GM12878 (cell line): ENCODE measurements at regions of chr2 and their contacts with region 1.

Region 1: GRCh38 chr2:137910641-137911040 is 53.6 kb upstream of the HNMT start:
- DNase-seq: no peak
- ATAC-seq: no peak
- H3K4me3 ChIP-seq: no peak overlapping the region
- H3K27ac ChIP-seq: no peak overlapping the region
- H3K4me1 ChIP-seq: no peaks in the 10 kb centered on the region
- H3K27me3 ChIP-seq: no peaks in the 10 kb centered on the region; a peak in 1 of 4 replicates
- CTCF ChIP-seq: peak; percentile 28 to 53 (median 28); a peak in 4 of 6 replicates
- EP300 ChIP-seq: no peak
- POLR2A ChIP-seq: no peak
- RAD21 ChIP-seq: peak; percentile 62

Region 2: DNA sequence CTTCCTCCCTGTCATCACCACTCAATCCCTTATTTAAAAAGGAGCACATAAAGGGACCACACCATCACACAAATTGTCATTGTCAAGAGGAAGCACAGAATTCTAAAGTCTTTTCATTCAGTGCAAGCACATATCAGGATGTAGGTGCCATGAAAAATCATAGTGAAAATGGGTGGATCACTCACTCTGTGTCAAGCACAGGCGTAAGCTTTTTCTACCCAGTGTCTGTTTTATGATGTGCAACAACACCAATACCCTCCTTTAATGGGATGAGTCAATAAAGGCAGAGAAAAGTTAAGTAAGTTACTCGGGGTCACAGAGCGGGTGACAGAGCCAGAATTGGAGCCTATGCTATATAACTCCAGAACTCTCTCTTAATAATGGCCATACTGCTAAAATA is 168.7 kb before region 1 on chr2:
- CTCF ChIA-PET with region 1: no interaction called
- POLR2A ChIA-PET with region 1: no interaction called
- RAD21 ChIA-PET with region 1: no interaction called
- SMC1A ChIA-PET with region 1: no interaction called
- in situ Hi-C with region 1: no loop called
- intact Hi-C with region 1: no loop called
- DNase-seq: no peak
- ATAC-seq: no peak
- H3K4me3 ChIP-seq: no peak overlapping the region
- H3K27ac ChIP-seq: no peak overlapping the region
- H3K4me1 ChIP-seq: no peaks in the 10 kb centered on the region
- H3K27me3 ChIP-seq: no peaks in the 10 kb centered on the region
- CTCF ChIP-seq: no peak
- EP300 ChIP-seq: no peak
- POLR2A ChIP-seq: no peak
- RAD21 ChIP-seq: no peak

Region 3: DNA sequence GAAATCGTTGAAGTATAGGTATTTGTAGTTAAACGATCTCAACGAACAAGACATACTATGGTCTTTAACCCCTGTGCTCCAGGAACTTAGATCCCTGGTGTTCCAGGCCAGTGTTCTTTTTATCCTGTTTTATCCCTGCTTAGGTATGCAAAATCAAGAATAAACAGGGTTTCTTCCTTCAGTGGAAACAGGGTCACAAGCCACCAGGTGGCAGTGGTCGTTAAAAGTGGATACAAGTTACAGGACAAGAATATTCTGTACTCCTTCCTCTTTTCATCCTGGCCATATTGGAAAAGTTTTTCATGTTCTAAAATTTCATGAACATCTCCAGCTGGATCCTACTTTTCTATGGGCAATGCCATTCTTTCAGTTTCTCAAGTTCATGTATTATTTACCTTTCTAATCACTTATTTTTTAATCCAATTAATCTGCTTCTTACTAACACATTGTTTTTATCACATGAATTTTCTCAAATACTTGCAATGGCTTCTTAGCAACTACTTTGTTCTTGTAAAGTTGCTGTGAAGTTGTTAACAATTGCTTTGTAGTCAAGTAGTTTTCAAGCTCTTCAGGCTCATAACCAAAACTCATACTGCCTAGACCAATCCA is 37.2 kb after region 1 on chr2:
- CTCF ChIA-PET with region 1: interaction called, 11 read pairs
- POLR2A ChIA-PET with region 1: no interaction called
- RAD21 ChIA-PET with region 1: interaction called, 4 read pairs
- SMC1A ChIA-PET with region 1: interaction called, 5 read pairs
- in situ Hi-C with region 1: no loop called
- intact Hi-C with region 1: no loop called
- DNase-seq: no peak
- ATAC-seq: peak; percentile 74
- H3K4me3 ChIP-seq: no peak overlapping the region
- H3K27ac ChIP-seq: no peak overlapping the region
- H3K4me1 ChIP-seq: no peaks in the 10 kb centered on the region
- H3K27me3 ChIP-seq: no peaks in the 10 kb centered on the region
- CTCF ChIP-seq: peak; percentile 49 to 58 (median 50); a peak in 4 of 6 replicates
- EP300 ChIP-seq: no peak
- POLR2A ChIP-seq: no peak
- RAD21 ChIP-seq: peak; percentile 69

Region 4: DNA sequence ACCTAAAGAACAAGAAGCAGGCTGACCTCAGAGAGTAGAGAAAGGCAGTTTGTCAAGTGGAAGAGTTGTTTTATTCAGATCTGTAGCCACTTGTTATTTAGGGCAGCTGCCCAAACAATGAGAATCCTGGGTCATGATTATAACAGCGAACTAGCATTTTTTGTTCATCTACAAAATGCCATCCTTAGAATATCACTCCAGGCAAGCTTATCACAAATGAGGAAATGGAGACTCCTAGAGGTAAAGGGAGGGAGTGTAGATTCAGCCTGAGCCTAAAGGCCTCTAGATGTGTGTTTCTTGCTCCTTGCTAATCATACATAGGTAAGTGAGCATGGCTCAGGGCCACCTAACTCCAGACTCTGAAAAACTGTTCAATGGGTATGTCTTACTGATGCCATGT is 179.7 kb after region 1 on chr2:
- CTCF ChIA-PET with region 1: interaction called, 40 read pairs
- POLR2A ChIA-PET with region 1: no interaction called
- RAD21 ChIA-PET with region 1: interaction called, 27 read pairs
- SMC1A ChIA-PET with region 1: interaction called, 40 read pairs
- in situ Hi-C with region 1: loop called (anchors 10 kb)
- intact Hi-C with region 1: loop called (anchors 1 kb)
- DNase-seq: no peak
- ATAC-seq: peak; percentile 98
- H3K4me3 ChIP-seq: no peak overlapping the region
- H3K27ac ChIP-seq: no peak overlapping the region
- H3K4me1 ChIP-seq: no peaks in the 10 kb centered on the region
- H3K27me3 ChIP-seq: no peaks in the 10 kb centered on the region
- CTCF ChIP-seq: peak; percentile 56 to 73 (median 58); a peak in 5 of 6 replicates
- EP300 ChIP-seq: no peak
- POLR2A ChIP-seq: no peak
- RAD21 ChIP-seq: peak; percentile 75

Region 5: DNA sequence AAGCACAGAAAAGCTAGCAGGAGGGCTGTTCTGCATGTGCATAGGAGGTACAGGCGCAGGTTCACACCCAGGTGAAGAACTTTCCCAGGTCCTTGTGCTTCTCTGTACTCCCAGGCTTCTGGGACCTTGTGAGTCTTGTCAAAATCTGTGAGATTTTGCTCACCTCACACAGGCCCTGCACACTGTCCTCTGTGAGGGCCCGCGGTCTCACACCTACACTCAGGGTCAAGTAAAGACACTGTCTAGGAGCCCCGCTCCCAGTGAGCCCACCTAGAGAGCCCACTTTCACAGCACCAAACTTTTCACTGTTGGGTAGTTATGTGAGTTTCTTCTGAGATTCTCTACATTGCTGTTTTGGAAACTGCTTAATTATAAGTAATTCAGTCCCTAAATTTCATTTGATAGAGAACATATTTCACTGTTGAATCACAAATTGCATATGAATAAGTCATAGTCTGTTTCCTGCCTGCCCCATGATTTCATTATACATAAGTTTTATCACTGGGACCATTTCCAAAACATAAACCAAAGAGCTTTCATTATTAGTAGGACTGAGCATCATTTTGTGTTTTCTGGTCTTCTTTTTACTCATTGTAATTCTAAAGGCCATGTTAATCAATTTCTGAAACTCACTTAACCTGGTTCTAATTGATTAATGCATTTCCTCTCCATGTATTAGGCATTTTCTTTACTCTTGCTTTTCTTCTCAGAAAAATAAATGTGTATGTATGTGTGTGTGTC is 356.7 kb after region 1 on chr2:
- CTCF ChIA-PET with region 1: no interaction called
- POLR2A ChIA-PET with region 1: no interaction called
- RAD21 ChIA-PET with region 1: interaction called, 3 read pairs
- SMC1A ChIA-PET with region 1: no interaction called
- in situ Hi-C with region 1: no loop called
- intact Hi-C with region 1: loop called (anchors 10 kb)
- DNase-seq: peak; percentile 47
- ATAC-seq: peak; percentile 88
- H3K4me3 ChIP-seq: no peak overlapping the region
- H3K27ac ChIP-seq: no peak overlapping the region
- H3K4me1 ChIP-seq: peaks cover 9% of the 10 kb centered on the region; the same call in 1 of the 2 replicates
- H3K27me3 ChIP-seq: no peaks in the 10 kb centered on the region
- CTCF ChIP-seq: no peak
- EP300 ChIP-seq: peak; percentile 29 to 77; a peak in 3 of 4 replicates
- POLR2A ChIP-seq: no peak
- RAD21 ChIP-seq: no peak

Region 6: DNA sequence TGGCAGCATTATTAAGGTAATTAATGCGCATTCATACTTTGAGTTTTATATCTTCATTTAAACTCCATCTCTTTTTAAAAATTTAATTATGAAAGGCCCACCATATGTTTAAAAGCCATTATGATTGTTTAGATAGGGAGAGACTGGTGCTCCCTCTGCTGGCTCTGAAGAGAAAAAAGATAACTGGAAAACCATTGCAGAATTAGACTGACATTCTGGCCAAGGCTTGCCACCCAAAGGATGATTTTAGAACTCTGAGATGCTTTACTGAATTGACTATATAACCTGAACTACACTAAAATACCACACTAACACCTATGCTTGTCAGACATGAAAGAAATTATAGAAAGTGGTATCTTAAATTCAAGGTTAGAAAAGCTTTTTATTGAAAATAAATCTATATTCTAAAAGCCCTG is 463.4 kb after region 1 on chr2:
- CTCF ChIA-PET with region 1: interaction called, 15 read pairs
- POLR2A ChIA-PET with region 1: no interaction called
- RAD21 ChIA-PET with region 1: interaction called, 14 read pairs
- SMC1A ChIA-PET with region 1: interaction called, 12 read pairs
- in situ Hi-C with region 1: loop called (anchors 10 kb)
- intact Hi-C with region 1: loop called (anchors 2 kb)
- DNase-seq: peak; percentile 12
- ATAC-seq: peak; percentile 72
- H3K4me3 ChIP-seq: no peak overlapping the region
- H3K27ac ChIP-seq: no peak overlapping the region
- H3K4me1 ChIP-seq: no peaks in the 10 kb centered on the region
- H3K27me3 ChIP-seq: no peaks in the 10 kb centered on the region
- CTCF ChIP-seq: peak; percentile 49 to 66 (median 59)
- EP300 ChIP-seq: no peak
- POLR2A ChIP-seq: no peak
- RAD21 ChIP-seq: peak; percentile 86

Region 7: GRCh38 chr2:138712212-138712979 is 801.8 kb after region 1 on chr2:
- CTCF ChIA-PET with region 1: interaction called, 27 read pairs
- POLR2A ChIA-PET with region 1: no interaction called
- RAD21 ChIA-PET with region 1: interaction called, 5 read pairs
- SMC1A ChIA-PET with region 1: interaction called, 15 read pairs
- in situ Hi-C with region 1: no loop called
- intact Hi-C with region 1: loop called (anchors 1 kb)
- DNase-seq: peak; percentile 61
- ATAC-seq: peak; percentile 93
- H3K4me3 ChIP-seq: no peak overlapping the region
- H3K27ac ChIP-seq: no peak overlapping the region
- H3K4me1 ChIP-seq: peaks cover 14% of the 10 kb centered on the region; the same call in 1 of the 2 replicates
- H3K27me3 ChIP-seq: no peaks in the 10 kb centered on the region; a peak in 1 of 4 replicates
- CTCF ChIP-seq: no peak
- EP300 ChIP-seq: peak; percentile 49 to 74; a peak in 2 of 4 replicates
- POLR2A ChIP-seq: no peak
- RAD21 ChIP-seq: no peak

Region 8: GRCh38 chr2:138718405-138718804 is 807.8 kb after region 1 on chr2:
- CTCF ChIA-PET with region 1: interaction called, 27 read pairs
- POLR2A ChIA-PET with region 1: no interaction called
- RAD21 ChIA-PET with region 1: interaction called, 12 read pairs
- SMC1A ChIA-PET with region 1: interaction called, 15 read pairs
- in situ Hi-C with region 1: no loop called
- intact Hi-C with region 1: loop called (anchors 1 kb)
- DNase-seq: no peak
- ATAC-seq: peak; percentile 40
- H3K4me3 ChIP-seq: no peak overlapping the region
- H3K27ac ChIP-seq: no peak overlapping the region
- H3K4me1 ChIP-seq: no peaks in the 10 kb centered on the region
- H3K27me3 ChIP-seq: no peaks in the 10 kb centered on the region; a peak in 2 of 4 replicates
- CTCF ChIP-seq: no peak
- EP300 ChIP-seq: no peak
- POLR2A ChIP-seq: no peak
- RAD21 ChIP-seq: no peak